ENCODE measurements at regions of chr6 and their contacts with region 1.

Region 1: DNA sequence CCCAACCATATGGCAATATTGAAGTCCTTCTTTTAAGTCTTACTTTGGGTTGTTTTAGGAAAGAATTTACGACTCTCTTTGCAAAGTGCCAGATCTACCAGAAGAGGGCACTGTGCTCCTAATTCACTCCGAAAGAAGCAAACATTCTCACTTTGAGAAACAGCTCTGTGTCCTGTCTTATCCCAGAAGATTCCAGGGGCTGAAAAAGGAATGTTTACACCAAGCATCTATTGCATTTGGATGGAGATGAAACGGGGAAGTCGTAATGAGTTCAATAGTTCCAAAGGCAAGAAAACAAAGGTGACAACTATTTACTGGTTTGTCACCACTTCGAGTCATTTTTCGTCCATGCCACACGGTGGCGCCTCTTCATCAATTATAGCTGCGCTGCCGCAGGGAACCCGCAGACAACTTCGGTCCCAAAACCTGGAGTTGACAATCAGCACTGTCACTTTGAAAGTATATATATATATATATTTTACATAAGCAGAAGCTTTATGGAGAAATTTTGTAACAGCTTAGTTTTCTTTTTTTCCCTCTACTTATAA is 121.6 kb downstream of the MOXD1 start:
- DNase-seq: peak; percentile 54
- H3K4me3 ChIP-seq: peak overlapping the region; percentile 55
- H3K27ac ChIP-seq: no peak overlapping the region
- H3K27me3 ChIP-seq: no peaks in the 10 kb centered on the region
- CTCF ChIP-seq: peak; percentile 76

Region 2: DNA sequence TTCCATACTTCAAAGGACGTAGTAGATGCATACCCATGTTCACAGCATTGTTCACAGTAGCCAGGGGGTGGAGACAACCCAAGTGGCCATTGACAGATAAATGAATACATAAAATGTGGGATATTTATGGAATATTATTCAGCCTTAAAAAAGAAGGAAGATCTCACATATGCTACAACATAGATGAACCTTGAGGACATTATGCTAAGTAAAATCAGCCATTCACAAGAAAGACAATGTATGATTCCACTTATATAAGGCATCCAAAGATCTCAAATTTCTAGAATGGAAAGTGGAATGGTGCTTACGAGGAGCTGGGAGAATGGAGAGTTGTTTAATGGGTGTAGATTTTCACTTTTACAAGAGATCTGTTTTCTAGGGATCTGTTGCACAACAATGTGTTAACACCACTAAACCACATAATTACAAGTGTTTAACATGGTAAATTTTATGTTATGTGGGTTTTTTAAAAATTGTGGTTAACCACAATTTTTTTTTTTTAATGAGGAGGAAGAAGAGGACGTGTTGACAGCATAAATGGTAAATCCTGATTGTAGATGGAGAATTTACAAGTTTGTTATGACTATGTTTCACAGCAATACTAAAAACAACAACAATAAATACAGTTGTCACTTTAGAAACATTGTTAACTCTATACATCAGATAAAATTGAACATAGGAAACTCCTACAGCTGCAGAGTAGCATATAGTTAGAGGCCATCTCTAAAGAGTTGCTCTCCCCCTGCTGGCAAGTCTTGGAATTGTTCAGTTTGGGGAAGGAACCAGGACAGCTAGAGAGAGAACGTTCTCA is 370.1 kb before region 1 on chr6:
- CTCF ChIA-PET with region 1: interaction called, 112 read pairs
- POLR2A ChIA-PET with region 1: no interaction called
- DNase-seq: peak; percentile 47
- H3K4me3 ChIP-seq: no peak overlapping the region
- H3K27ac ChIP-seq: no peak overlapping the region
- H3K27me3 ChIP-seq: no peaks in the 10 kb centered on the region
- CTCF ChIP-seq: peak; percentile 94

Region 3: DNA sequence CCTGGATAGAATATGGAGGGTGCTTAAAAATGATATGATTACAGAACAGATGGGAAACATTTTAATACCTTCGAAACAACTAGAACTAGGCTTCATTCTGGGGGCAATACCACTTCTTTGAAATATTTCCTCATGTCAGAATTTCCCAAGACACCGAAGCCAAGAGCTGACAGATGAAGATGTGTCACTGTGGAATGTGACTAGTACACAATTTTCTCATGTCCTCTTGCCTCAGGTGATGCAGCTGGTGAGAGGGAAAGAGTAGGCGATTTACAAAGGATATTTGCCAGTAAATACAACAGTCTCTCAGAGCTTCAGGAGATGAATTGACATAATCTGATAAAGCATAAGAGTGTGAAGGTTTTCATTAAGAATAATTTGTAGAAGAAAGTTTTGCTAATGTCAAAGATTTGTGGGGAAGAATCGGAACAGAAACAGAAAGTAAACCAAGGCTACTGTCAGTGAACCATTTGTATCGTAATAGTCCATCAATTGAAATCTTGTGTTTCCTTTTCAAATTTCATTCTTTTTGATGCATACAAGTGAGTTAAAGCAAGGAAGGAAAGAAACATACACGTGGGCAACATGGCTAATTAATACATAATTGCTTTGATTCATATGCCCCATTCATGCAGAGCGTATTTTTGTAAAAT is 163.8 kb before region 1 on chr6:
- CTCF ChIA-PET with region 1: interaction called, 14 read pairs
- POLR2A ChIA-PET with region 1: no interaction called
- DNase-seq: no peak
- H3K4me3 ChIP-seq: peak overlapping the region; percentile 40
- H3K27ac ChIP-seq: no peak overlapping the region
- H3K27me3 ChIP-seq: no peaks in the 10 kb centered on the region
- CTCF ChIP-seq: no peak

Region 4: GRCh38 chr6:132236744-132237143 is 42.9 kb before region 1 on chr6:
- CTCF ChIA-PET with region 1: interaction called, 23 read pairs
- POLR2A ChIA-PET with region 1: no interaction called
- DNase-seq: no peak
- H3K4me3 ChIP-seq: no peak overlapping the region
- H3K27ac ChIP-seq: no peak overlapping the region
- H3K27me3 ChIP-seq: no peaks in the 10 kb centered on the region
- CTCF ChIP-seq: no peak

Region 5: GRCh38 chr6:132456700-132457143 is 177.1 kb after region 1 on chr6:
- CTCF ChIA-PET with region 1: interaction called, 10 read pairs
- POLR2A ChIA-PET with region 1: no interaction called
- DNase-seq: no peak
- H3K4me3 ChIP-seq: no peak overlapping the region
- H3K27ac ChIP-seq: no peak overlapping the region
- H3K27me3 ChIP-seq: no peaks in the 10 kb centered on the region
- CTCF ChIP-seq: no peak

Region 6: GRCh38 chr6:132495604-132496079 is 216.0 kb after region 1 on chr6:
- CTCF ChIA-PET with region 1: interaction called, 15 read pairs
- POLR2A ChIA-PET with region 1: no interaction called
- DNase-seq: no peak
- H3K4me3 ChIP-seq: no peak overlapping the region
- H3K27ac ChIP-seq: no peak overlapping the region
- H3K27me3 ChIP-seq: no peaks in the 10 kb centered on the region
- CTCF ChIP-seq: no peak

Region 7: DNA sequence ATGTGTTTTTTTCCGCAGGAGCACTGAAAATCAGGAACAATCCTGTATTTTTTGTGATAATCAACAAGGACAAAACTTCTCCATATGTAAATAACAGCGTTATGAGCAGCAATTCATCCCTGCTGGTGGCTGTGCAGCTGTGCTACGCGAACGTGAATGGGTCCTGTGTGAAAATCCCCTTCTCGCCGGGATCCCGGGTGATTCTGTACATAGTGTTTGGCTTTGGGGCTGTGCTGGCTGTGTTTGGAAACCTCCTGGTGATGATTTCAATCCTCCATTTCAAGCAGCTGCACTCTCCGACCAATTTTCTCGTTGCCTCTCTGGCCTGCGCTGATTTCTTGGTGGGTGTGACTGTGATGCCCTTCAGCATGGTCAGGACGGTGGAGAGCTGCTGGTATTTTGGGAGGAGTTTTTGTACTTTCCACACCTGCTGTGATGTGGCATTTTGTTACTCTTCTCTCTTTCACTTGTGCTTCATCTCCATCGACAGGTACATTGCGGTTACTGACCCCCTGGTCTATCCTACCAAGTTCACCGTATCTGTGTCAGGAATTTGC is 290.6 kb after region 1 on chr6 and contains the start of gene TAAR6:
- CTCF ChIA-PET with region 1: no interaction called
- POLR2A ChIA-PET with region 1: no interaction called
- DNase-seq: no peak
- H3K4me3 ChIP-seq: no peak within 1 kb of the TSS
- H3K27ac ChIP-seq: no peak within 1 kb of the TSS
- H3K27me3 ChIP-seq: peaks cover 18% of the 10 kb centered on the region
- CTCF ChIP-seq: no peak
- polyA plus RNA-seq, gene TAAR6: not detected in 2 replicates

Region 8: GRCh38 chr6:132937466-132937906 is 657.8 kb after region 1 on chr6:
- CTCF ChIA-PET with region 1: no interaction called
- POLR2A ChIA-PET with region 1: no interaction called
- DNase-seq: no peak
- H3K4me3 ChIP-seq: no peak overlapping the region
- H3K27ac ChIP-seq: no peak overlapping the region
- H3K27me3 ChIP-seq: no peaks in the 10 kb centered on the region
- CTCF ChIP-seq: peak; percentile 76